Activated naive CD4-positive, alpha-beta T cell treated with anti-CD3 and anti-CD28 coated beads for 36 hours (primary cell): ENCODE measurements at regions of chr10 and their contacts with region 1.

Region 1: DNA sequence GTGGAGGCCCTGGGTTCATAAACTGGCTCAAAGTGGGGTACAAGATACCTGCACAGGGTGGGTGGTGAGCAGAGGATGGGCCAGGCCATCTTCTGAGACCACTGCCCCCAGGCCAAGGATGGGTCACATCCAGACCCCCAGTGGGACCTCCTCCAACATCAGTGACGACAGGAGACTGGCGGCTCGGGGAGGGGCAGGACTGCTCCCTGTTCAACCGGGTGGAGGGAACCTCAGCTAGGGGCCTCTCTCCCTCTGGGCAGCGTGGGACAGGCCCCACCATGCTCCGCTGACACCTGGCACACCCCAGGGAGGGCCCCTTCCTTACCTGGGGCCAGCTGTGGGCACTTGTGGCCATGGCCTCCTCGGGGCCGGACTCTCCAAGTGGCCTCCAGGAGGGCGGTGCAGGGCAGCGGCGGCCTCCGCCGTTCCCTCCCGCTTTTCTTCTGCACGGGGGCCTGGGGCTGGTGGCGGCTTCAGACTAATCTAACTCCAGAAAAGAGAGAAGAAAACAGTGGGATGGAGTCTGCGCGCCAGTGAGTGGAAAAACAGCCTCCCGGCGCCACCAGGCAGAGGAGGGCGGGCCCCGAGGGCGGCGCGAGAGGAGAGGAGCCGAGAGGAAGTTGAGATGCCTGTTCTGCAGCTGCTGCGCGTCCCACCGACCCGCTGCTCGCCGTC is at the start of gene CALHM2:
- DNase-seq: peak; percentile 73
- H3K4me3 Mint-ChIP-seq: peak within 1 kb of the TSS; percentile 80
- H3K27ac Mint-ChIP-seq: no peak within 1 kb of the TSS
- H3K4me1 Mint-ChIP-seq: peaks cover 35% of the 10 kb centered on the region
- H3K27me3 Mint-ChIP-seq: no peaks in the 10 kb centered on the region
- total RNA-seq, gene CALHM2: 8.3 to 9.5 TPM

Region 2: GRCh38 chr10:103470761-103471653 is 19.0 kb after region 1 on chr10:
- CTCF ChIA-PET with region 1: interaction called, 3 read pairs
- intact Hi-C with region 1: loop called (anchors 1 kb)
- DNase-seq: peak; percentile 76
- H3K4me3 Mint-ChIP-seq: no peak overlapping the region
- H3K27ac Mint-ChIP-seq: peak overlapping the region; percentile 13
- H3K4me1 Mint-ChIP-seq: peaks cover 16% of the 10 kb centered on the region
- H3K27me3 Mint-ChIP-seq: no peaks in the 10 kb centered on the region

Region 3: DNA sequence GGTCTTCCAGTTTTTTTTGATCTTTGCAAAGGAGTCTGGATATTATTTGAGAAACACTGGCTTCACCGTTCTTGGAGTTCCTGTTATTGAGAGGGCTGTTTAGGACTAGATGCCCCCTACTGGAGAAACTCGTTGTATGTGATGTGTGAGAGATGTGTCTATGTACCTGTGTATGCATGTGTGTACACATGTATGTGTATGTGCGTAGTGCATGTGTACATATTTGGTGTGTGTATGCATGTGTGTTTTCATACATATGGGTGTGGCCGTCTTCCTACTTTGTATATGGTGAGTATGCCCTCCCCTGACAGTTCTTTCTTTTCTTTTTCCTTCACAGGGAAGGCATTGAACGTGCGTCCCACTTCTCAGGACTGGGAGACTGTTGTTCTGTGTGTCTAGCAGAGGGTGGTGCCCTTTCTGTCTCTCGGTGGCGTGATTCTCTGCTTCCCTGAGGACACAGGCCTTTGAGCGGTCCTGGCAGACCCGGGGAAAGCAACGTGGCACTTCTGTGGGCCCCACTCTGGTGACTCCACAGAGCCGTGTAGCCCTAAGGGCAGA is 30.1 kb after region 1 on chr10:
- CTCF ChIA-PET with region 1: interaction called, 4 read pairs
- intact Hi-C with region 1: loop called (anchors 1 kb)
- DNase-seq: peak; percentile 41
- H3K4me3 Mint-ChIP-seq: no peak overlapping the region
- H3K27ac Mint-ChIP-seq: no peak overlapping the region
- H3K4me1 Mint-ChIP-seq: no peaks in the 10 kb centered on the region
- H3K27me3 Mint-ChIP-seq: no peaks in the 10 kb centered on the region